GM23248 (cell line): ENCODE measurements at regions of chr4 and their contacts with region 1.

Region 1: DNA sequence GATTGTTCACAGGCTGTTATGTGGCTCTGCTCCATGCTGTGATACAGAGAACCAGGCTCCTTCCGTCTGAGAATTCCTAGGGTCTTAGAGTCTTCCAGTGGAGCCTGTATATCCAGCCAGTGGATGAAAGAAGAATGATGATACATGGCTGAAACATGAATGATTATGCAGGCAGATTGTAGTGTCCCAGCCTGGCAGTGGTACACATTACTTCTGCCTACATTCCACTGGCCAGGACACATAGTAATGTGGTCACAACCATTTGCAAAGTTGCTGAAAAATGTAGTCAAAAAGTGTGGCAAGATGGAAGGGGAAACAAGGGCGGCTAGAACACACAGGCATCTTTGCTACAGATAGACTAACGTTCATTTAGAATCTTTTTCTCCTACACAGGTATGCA is 4.5 kb upstream of the GBA3 start:
- DNase-seq: peak; percentile 47
- H3K4me3 ChIP-seq: no peak overlapping the region
- H3K27ac ChIP-seq: no peak overlapping the region
- H3K4me1 ChIP-seq: peaks cover 5% of the 10 kb centered on the region; the same call in 1 of the 2 replicates
- H3K27me3 ChIP-seq: peaks cover 23% of the 10 kb centered on the region

Region 2: DNA sequence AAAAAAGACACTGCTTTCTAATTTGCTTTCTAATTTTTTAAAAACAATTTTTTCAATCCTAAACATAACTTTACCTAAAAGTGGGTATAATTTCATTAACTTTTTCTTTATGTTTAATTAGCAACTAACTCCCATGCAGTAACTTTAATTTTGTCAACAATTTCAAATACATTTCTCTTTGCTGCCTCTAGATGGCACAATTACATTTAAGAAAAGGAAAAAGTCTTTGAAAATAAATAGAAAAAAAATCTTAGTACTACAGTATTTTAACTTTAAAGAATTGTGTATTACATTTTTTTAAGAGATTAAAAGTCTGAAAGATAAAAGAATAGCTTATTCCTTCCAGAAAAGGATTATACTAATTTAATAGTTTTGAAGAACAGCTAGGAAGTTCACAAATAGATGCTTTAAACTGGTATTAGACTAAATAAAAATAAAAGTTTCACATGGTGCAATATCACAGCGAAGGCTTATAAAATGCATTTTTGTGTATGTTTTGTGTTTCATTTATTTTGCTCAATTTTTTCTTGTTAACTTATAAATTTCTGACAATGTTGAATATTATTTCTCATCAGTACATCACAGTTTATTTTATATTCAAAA is 277.5 kb before region 1 on chr4:
- in situ Hi-C with region 1: loop called (anchors 10 kb)
- DNase-seq: peak; percentile 55
- H3K4me3 ChIP-seq: no peak overlapping the region
- H3K27ac ChIP-seq: no peak overlapping the region
- H3K4me1 ChIP-seq: no peaks in the 10 kb centered on the region
- H3K27me3 ChIP-seq: no peaks in the 10 kb centered on the region

Region 3: DNA sequence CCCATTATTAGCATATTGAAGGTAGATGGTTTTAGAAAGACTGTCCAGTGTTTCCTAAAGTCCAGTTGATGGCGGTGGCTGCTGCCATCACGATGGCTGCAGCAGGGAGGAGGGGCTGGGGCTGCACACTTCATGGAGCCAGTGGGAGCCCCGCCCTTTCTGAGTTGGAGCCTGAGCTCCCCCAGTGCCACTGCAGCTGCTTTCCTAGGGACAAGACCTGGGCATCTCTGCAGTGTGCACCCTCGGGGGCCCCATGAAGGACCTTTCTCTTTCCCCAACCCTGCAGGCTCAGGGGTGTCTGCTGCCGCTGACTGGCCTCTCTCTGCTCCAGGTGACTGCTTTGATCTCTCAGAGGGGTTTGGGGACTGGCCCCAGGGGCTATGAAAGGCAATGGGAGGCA is 506.9 kb after region 1 on chr4:
- in situ Hi-C with region 1: no loop called
- DNase-seq: no peak
- H3K4me3 ChIP-seq: no peak overlapping the region
- H3K27ac ChIP-seq: no peak overlapping the region
- H3K4me1 ChIP-seq: no peaks in the 10 kb centered on the region
- H3K27me3 ChIP-seq: no peaks in the 10 kb centered on the region